Activated CD8-positive, alpha-beta T cell treated with anti-CD3 and anti-CD28 coated beads for 36 hours (primary cell): ENCODE measurements at regions of chr6 and their contacts with region 1.

Region 1: DNA sequence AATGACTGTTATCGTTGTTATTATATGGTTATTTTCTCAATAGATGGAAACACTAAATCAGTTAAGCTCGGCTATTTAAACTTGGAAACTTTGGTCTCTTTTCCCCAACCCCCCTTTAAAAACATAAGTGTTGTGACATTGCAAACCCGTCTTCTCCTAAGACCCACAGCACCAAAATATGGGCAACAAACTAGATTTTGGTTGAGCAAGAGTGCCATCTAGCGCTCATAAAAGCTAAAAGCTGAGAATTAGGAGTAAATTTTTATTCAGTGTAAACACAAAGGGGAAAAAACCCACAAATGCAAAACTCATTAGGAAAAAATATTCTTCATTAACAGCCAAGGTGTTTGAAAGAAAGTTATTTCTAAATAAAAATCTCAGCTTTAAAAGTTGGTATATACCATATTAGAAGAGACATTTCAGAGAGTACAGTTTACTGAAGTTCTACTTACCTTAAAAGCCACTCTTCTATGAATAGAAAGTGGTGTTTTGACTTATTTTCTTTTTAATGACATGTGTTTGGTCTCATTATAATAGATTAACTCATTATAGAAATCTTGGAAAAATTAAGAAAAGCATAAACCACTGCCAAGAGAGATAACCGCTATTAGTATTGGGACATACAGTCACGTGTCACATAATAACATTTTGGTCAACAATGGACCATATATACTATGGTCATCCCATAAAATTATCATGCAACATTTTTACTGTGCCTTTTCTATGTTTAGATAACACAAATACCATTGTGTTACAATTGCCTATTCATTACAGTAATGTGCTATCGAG is 21.1 kb downstream of the SESN1 start:
- DNase-seq: peak; percentile 54
- ATAC-seq: peak; percentile 72
- H3K4me3 Mint-ChIP-seq: no peak overlapping the region
- H3K27ac Mint-ChIP-seq: no peak overlapping the region
- H3K4me1 Mint-ChIP-seq: peaks cover 25% of the 10 kb centered on the region
- H3K27me3 Mint-ChIP-seq: no peaks in the 10 kb centered on the region
- CTCF ChIP-seq: peak; percentile 82

Region 2: GRCh38 chr6:108526739-108527174 is 546.8 kb before region 1 on chr6:
- CTCF ChIA-PET with region 1: no interaction called
- POLR2A ChIA-PET with region 1: no interaction called
- intact Hi-C with region 1: no loop called
- DNase-seq: no peak
- ATAC-seq: no peak
- H3K4me3 Mint-ChIP-seq: no peak overlapping the region
- H3K27ac Mint-ChIP-seq: no peak overlapping the region
- H3K4me1 Mint-ChIP-seq: no peaks in the 10 kb centered on the region
- H3K27me3 Mint-ChIP-seq: no peaks in the 10 kb centered on the region
- CTCF ChIP-seq: peak; percentile 83

Region 3: DNA sequence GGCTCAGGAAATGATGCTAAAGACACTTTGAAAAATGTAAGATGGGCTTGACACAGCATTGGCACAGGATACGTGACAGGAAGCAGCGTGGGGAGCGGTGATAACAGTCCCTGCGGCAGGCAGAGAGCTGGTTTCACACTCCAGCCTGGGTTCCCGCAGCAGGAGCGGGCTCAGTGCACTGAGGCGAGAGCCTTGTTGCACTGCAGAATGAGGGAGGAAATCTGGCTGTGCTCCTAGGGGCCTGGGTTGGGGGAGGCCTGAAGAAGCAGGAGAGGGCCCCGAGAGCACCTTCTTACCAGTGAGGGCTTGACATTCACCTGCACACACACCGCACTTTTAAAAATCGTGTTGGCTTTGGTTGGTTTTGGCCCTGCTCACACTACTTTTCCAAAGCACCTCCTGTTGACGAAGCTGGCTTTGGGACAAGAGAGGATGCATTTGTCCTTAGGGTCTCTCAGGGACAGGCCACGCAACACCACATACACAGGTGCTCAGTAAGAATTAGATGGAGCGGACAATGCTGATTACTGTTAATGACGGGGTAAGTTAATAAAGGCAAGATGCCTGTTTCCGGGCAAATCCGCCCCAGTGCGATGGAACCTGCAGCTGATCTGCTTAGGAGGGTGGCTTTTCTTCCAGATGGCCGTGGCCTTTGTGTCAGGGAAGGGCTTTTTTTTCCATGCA is 274.7 kb before region 1 on chr6:
- CTCF ChIA-PET with region 1: interaction called, 12 read pairs
- POLR2A ChIA-PET with region 1: no interaction called
- intact Hi-C with region 1: no loop called
- DNase-seq: peak; percentile 79
- ATAC-seq: peak; percentile 98
- H3K4me3 Mint-ChIP-seq: peak overlapping the region; percentile 47
- H3K27ac Mint-ChIP-seq: peak overlapping the region; percentile 69
- H3K4me1 Mint-ChIP-seq: peaks cover 27% of the 10 kb centered on the region
- H3K27me3 Mint-ChIP-seq: no peaks in the 10 kb centered on the region
- CTCF ChIP-seq: no peak

Region 4: GRCh38 chr6:108874470-108875160 is 198.9 kb before region 1 on chr6:
- CTCF ChIA-PET with region 1: interaction called, 12 read pairs
- POLR2A ChIA-PET with region 1: no interaction called
- intact Hi-C with region 1: no loop called
- DNase-seq: peak; percentile 87
- ATAC-seq: peak; percentile 79
- H3K4me3 Mint-ChIP-seq: peak overlapping the region; percentile 54
- H3K27ac Mint-ChIP-seq: peak overlapping the region; percentile 93
- H3K4me1 Mint-ChIP-seq: peaks cover 48% of the 10 kb centered on the region
- H3K27me3 Mint-ChIP-seq: no peaks in the 10 kb centered on the region
- CTCF ChIP-seq: no peak

Region 5: DNA sequence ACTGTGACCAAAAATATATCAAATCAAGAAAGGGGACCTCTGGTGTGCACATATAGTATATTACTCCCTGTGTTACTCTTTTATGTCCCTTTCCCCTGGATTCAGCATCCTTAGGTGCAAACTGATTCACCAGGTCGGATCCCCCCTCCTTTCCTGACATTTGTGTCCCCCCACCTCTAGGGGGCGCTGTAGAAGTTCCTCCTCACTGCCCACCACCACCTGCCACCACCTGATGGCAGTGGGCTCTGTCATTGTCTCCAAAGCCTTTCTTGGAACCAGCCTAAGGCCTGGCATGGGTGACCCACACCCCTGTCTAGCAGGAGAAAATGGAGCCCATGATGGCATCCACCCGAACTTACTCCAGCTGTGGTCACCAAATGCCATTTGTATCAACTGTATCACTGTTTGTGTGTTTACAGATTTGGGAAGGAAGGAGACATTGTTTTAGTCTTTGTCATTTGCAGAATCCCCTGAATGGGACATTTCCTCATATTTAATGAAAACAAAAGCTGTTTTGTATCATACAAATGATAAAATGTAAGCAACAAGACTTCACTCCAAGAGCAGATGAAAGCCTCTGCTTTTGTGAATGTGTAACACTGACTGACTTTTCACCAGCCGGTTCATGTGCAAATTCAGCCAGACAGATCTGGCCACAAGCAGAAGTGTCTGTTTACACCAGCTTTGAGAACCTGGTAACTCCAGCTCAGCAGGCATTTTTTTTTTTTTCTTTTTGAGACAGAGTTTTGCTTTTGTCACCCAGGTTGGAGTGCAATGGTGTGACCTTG is 159.1 kb before region 1 on chr6:
- CTCF ChIA-PET with region 1: interaction called, 32 read pairs
- POLR2A ChIA-PET with region 1: no interaction called
- intact Hi-C with region 1: loop called (anchors 5 kb)
- DNase-seq: peak; percentile 65
- ATAC-seq: peak; percentile 73
- H3K4me3 Mint-ChIP-seq: no peak overlapping the region
- H3K27ac Mint-ChIP-seq: no peak overlapping the region
- H3K4me1 Mint-ChIP-seq: no peaks in the 10 kb centered on the region
- H3K27me3 Mint-ChIP-seq: no peaks in the 10 kb centered on the region
- CTCF ChIP-seq: peak; percentile 90

Region 6: GRCh38 chr6:109009236-109009961 is 64.1 kb before region 1 on chr6:
- CTCF ChIA-PET with region 1: interaction called, 15 read pairs
- POLR2A ChIA-PET with region 1: interaction called, 3 read pairs
- intact Hi-C with region 1: no loop called
- DNase-seq: peak; percentile 93
- ATAC-seq: peak; percentile 94
- H3K4me3 Mint-ChIP-seq: peak overlapping the region; percentile 94
- H3K27ac Mint-ChIP-seq: peak overlapping the region; percentile 97
- H3K4me1 Mint-ChIP-seq: peaks cover 58% of the 10 kb centered on the region
- H3K27me3 Mint-ChIP-seq: no peaks in the 10 kb centered on the region
- CTCF ChIP-seq: no peak